ENCODE measurements at regions of chr10 and their contacts with region 1.

Region 1: DNA sequence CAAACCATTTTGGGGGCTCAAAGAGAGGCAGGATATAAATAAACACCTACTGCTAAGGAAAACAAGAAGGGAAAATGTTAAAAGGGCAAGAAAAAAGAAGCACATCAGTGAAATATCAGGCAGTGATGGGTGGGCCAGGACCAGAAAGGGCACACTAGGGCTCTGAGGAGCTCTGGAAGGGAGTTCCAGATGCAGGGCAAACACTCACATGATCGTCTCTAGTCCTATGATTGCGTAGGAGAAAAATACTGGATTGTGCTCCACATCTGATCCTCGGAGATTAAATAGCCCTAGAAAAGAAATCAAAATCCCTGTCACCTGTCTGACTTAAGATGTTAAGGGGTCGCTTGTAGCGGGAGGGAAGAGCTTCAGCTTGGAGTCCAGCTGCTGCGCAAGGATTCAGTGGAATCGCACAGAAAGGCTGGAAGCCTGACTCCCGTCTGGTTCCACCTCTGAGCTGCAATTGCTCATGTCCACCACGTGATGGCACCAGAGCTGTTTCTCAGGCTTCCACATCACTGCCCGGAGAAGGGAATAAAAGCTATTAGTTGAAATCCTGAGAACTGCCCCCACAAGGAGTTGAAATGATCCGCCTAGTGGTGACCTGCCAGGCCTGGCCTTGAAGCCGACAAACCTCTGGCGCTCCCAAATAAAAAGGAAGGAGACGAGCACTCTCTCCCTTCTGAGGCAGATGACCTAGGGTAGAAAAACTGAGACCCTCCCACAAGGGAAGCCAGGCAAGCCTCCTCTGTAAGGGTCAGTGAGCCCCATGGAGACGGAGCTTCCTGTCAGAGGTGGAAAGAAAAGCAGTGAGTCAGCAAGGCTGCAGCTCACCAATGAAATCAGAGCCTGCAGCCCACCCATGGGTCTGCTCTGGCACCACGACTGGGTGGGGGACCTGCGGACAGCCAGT is 39.2 kb downstream of the XPNPEP1 start:
- DNase-seq: peak; percentile 80
- H3K4me3 ChIP-seq: peak overlapping the region in 1 of 2 experiments; percentile 1; a peak in 1 of 4 replicates
- H3K27ac ChIP-seq: peak overlapping the region; percentile 53 to 77; a peak in 3 of 4 replicates
- H3K4me1 ChIP-seq: peaks cover 3 to 5% of the 10 kb centered on the region in 2 experiments; a peak in 2 of 4 replicates
- H3K27me3 ChIP-seq: no peaks in the 10 kb centered on the region
- CTCF ChIP-seq: peak; percentile 98
- EP300 ChIP-seq: no peak
- RAD21 ChIP-seq: peak; percentile 100

Region 2: DNA sequence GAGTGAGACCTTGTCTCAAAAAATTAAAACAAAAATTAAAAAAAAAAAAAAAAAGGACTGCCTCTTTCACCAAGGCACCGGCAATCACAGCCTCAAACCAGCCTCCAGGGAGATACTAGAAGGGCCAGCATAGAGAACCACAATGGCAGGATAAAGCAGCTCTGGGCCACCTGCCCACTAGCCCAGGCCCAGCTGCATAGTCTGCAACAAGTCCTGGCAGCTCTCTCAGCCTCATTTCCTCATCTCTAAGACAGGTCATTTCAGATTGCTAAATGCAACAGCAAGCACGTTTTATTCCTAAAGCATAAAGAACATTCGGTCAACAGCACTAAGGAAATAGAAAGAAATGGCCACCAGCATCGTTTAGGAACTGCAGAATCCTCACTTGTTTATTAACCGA is 10.4 kb after region 1 on chr10:
- CTCF ChIA-PET with region 1: interaction called, 61 read pairs
- POLR2A ChIA-PET with region 1: no interaction called
- DNase-seq: no peak
- H3K4me3 ChIP-seq: no peak overlapping the region
- H3K27ac ChIP-seq: peak overlapping the region; percentile 13 to 67; a peak in 3 of 4 replicates
- H3K4me1 ChIP-seq: peaks cover 20 to 27% of the 10 kb centered on the region in 2 experiments; a peak in 3 of 4 replicates
- H3K27me3 ChIP-seq: no peaks in the 10 kb centered on the region
- CTCF ChIP-seq: no peak
- EP300 ChIP-seq: no peak
- RAD21 ChIP-seq: no peak

Region 3: GRCh38 chr10:109929501-109930219 is 45.5 kb after region 1 on chr10:
- CTCF ChIA-PET with region 1: interaction called, 12 read pairs
- POLR2A ChIA-PET with region 1: no interaction called
- DNase-seq: no peak
- H3K4me3 ChIP-seq: no peak overlapping the region
- H3K27ac ChIP-seq: no peak overlapping the region
- H3K4me1 ChIP-seq: peaks cover 3 to 7% of the 10 kb centered on the region in 2 experiments; a peak in 3 of 4 replicates
- H3K27me3 ChIP-seq: no peaks in the 10 kb centered on the region
- CTCF ChIP-seq: no peak
- EP300 ChIP-seq: no peak
- RAD21 ChIP-seq: no peak

Region 4: GRCh38 chr10:109998513-109998912 is 114.4 kb after region 1 on chr10:
- CTCF ChIA-PET with region 1: interaction called, 11 read pairs
- POLR2A ChIA-PET with region 1: no interaction called
- DNase-seq: no peak
- H3K4me3 ChIP-seq: no peak overlapping the region
- H3K27ac ChIP-seq: no peak overlapping the region
- H3K4me1 ChIP-seq: peaks cover 0 to 5% of the 10 kb centered on the region in 2 experiments; a peak in 2 of 4 replicates
- H3K27me3 ChIP-seq: no peaks in the 10 kb centered on the region
- CTCF ChIP-seq: no peak
- EP300 ChIP-seq: no peak
- RAD21 ChIP-seq: no peak

Region 5: GRCh38 chr10:110042181-110042580 is 158.1 kb after region 1 on chr10:
- CTCF ChIA-PET with region 1: interaction called, 11 read pairs
- POLR2A ChIA-PET with region 1: no interaction called
- DNase-seq: no peak
- H3K4me3 ChIP-seq: no peak overlapping the region
- H3K27ac ChIP-seq: no peak overlapping the region
- H3K4me1 ChIP-seq: peaks cover 3 to 9% of the 10 kb centered on the region in 2 experiments; a peak in 2 of 4 replicates
- H3K27me3 ChIP-seq: no peaks in the 10 kb centered on the region
- CTCF ChIP-seq: no peak
- EP300 ChIP-seq: no peak
- RAD21 ChIP-seq: no peak

Region 6: GRCh38 chr10:110129490-110129889 is 245.4 kb after region 1 on chr10:
- CTCF ChIA-PET with region 1: interaction called, 25 read pairs
- POLR2A ChIA-PET with region 1: no interaction called
- DNase-seq: no peak
- H3K4me3 ChIP-seq: no peak overlapping the region
- H3K27ac ChIP-seq: no peak overlapping the region
- H3K4me1 ChIP-seq: no peaks in the 10 kb centered on the region
- H3K27me3 ChIP-seq: no peaks in the 10 kb centered on the region
- CTCF ChIP-seq: no peak
- EP300 ChIP-seq: no peak
- RAD21 ChIP-seq: no peak

Region 7: DNA sequence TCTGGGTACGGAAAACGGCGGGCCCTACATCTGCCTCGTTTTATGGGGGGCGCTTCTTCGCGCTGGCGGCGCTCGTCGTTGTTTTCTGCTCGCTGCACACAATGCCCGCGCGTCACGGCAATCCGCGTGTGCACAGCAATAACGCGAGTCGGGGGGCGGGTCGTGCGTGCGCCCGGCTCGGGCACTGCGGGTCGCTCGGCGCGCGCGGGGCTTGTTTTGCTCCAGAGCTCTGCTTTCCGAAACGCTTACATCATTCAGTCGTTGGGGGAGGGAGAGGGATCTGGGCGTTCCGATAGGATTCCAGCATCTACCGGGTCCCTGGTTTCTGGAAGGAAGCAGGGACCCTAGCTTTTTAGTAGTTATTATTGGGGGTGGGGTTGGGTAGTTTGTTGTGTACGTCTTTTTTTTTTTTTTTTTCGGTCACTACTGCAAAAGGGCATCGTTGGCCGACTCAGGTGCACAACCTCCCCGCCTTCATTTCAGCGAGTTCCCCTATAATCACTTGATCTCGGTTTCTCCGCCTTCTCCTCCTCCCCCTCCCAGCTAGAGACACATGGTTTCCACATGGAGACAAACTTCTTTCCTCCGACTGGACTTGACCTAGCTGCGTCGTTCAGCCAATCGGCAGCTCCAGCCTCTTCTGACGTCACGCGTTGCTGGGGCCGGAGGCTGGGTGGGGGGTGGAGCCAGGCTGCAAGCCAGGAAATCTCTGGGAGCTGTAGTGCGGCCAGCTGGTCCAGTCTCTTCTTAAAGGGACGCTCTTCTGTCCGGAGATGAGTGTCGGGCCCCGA is 326.8 kb after region 1 on chr10:
- CTCF ChIA-PET with region 1: interaction called, 26 read pairs
- POLR2A ChIA-PET with region 1: interaction called, 4 read pairs
- DNase-seq: peak; percentile 95
- H3K4me3 ChIP-seq: peak overlapping the region; percentile 79 to 88
- H3K27ac ChIP-seq: peak overlapping the region; percentile 76 to 97
- H3K4me1 ChIP-seq: peaks cover 0 to 15% of the 10 kb centered on the region in 2 experiments; a peak in 3 of 4 replicates
- H3K27me3 ChIP-seq: no peaks in the 10 kb centered on the region
- CTCF ChIP-seq: no peak
- EP300 ChIP-seq: no peak
- RAD21 ChIP-seq: no peak